Breast epithelium (tissue), 4 donors: ENCODE measurements at regions of chr14 and their contacts with region 1.

Region 1: DNA sequence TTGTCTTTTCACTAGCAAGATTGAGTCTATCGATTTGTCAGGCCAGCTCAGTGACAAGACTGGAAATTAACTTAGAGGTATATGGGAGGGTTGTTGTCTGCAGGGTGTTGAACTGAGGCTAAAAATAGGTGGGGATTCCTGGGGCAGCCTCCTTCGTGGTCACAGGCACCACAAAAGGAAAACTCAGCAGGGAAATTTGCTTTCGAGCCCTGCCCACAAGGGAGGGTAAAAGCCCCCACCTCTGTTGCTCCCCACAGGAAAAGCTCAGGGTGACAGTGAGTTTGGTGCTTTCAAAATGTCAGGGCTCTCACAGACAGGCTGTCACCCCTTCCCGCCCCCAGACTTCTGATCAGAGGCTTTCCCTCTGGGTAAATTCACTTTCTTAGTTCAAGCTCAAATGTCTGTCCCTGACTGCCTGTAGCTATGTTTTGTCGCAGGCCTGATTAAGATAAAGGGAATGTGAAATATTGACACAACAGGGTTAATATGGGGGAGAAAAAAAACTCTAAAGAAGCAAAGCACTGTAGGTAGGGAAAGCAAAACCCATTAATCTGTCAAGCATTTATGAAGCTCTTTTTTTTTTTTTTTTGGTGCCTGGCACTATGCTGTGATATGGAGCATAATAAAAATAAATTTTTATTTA is 11.7 kb upstream of the NFKBIA start:
- DNase-seq: no peak
- H3K4me3 ChIP-seq: no peak overlapping the region
- H3K27ac ChIP-seq: no peak overlapping the region
- H3K4me1 ChIP-seq: no peaks in the 10 kb centered on the region
- H3K27me3 ChIP-seq: no peaks in the 10 kb centered on the region
- CTCF ChIP-seq: no peak
- POLR2A ChIP-seq: no peak

Region 2: DNA sequence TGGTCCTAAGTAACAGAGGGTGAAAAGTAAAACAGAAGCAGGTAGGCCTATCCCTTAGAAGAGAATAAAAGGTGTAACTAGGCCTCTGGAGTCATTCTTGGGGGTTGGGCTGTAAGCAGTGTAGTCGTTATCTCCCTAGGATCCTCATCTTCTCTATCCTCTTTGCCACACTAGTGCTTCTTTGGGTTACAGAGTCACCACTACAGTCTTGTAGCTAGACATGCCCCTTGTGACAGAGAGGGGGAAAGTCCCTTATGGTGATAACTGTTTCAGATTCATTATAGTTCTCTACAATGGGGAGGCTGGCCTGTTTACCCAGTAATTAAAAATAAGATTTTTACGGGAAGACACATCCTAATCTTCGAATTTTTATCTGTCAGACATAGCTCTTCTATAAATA is 449.8 kb before region 1 on chr14:
- intact Hi-C with region 1: loop called (anchors 10 kb)
- DNase-seq: no peak
- H3K4me3 ChIP-seq: no peak overlapping the region
- H3K27ac ChIP-seq: no peak overlapping the region
- H3K4me1 ChIP-seq: no peaks in the 10 kb centered on the region
- H3K27me3 ChIP-seq: no peaks in the 10 kb centered on the region
- CTCF ChIP-seq: no peak
- POLR2A ChIP-seq: no peak